Naive thymus-derived CD8-positive, alpha-beta T cell (primary cell): ENCODE measurements at regions of chr16 and their contacts with region 1.

Region 1: DNA sequence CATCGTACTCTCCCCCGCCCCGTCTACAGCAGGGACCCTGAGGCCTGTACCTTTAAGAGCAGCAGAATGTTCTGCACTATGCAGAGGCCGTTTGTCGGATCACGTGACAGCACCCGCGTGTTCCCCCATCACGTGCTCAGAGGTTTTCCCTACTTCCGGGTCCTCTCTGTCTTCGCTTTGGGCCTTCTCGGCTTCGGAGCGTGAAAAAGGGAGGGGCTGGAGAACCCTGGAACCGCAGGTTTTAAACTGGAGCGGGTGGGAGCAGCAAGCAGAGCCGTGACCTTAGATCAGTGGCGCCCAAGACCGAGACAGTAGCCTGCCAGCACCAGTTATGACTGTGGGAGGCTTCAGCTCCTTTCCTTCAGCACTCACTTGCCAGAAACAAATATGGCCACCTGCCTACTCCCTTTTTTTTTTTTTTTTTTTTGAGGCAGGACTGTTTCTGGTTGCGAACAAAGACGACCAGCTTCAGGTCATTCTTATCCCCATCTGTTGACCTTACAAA is at the start of gene CLN3:
- DNase-seq: peak; percentile 61 to 98 (median 88)
- ATAC-seq: peak; percentile 69
- H3K4me3 Mint-ChIP-seq: peak within 1 kb of the TSS; percentile 95 to 99 (median 98)
- H3K27ac Mint-ChIP-seq: peak within 1 kb of the TSS; percentile 99 to 100 (median 100)
- H3K4me1 Mint-ChIP-seq: peaks cover 42 to 79% (median 68%) of the 10 kb centered on the region in 4 donors
- H3K27me3 Mint-ChIP-seq: no peaks in the 10 kb centered on the region
- polyA plus RNA-seq, gene CLN3: 16.2 to 27.2 (median 17.2) TPM

Region 2: DNA sequence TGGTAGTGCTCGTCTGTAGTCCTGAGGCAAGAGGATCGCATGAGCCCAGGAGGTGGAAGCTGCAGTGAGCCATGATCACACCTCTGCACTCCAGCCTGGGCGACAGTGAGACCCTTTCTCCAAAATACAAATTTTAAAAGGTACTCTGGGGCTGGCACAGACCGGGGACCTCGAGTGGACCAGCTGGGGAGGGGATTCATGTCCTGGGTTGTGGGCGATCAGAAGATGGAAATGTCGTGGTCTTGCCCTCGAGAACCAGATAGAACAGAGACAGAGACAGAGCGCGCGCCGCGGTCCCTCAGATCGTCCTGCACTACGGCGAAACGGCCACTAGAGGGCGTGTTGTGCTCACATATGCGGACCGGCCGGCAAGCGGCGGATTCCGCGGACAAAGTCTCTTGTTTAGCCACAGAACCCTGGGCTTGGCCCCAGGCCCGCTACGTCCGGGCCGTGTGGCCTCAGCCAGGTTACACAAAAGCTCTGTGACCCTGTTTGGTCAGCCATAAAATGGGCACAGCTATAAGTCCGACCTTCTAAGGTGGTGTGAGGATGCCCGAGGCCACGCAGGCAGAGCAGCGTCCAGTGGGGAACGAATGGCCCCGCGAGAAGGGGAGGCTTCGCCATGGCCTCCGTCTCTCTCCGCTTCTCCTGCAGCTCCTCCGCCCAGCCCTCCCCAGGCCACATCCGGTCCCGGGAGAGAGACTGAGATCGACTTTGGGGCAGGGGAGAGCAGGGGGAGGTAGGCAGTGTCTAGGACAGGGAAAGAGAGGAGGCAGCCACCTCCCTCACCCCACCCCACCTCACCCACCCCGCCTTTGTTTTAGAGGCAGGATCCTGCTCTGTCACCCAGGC is 214.3 kb before region 1 on chr16:
- POLR2A ChIA-PET with region 1: interaction called, 22 read pairs
- DNase-seq: peak; percentile 69 to 95 (median 84)
- ATAC-seq: peak; percentile 73 to 76
- H3K4me3 Mint-ChIP-seq: peak overlapping the region; percentile 70 to 88 (median 82)
- H3K27ac Mint-ChIP-seq: peak overlapping the region; percentile 90 to 99 (median 97)
- H3K4me1 Mint-ChIP-seq: peaks cover 32 to 62% (median 47%) of the 10 kb centered on the region in 4 donors
- H3K27me3 Mint-ChIP-seq: peaks cover 0 to 10% (median 0%) of the 10 kb centered on the region in 5 donors

Region 3: GRCh38 chr16:28503611-28504271 is 11.7 kb after region 1 on chr16:
- POLR2A ChIA-PET with region 1: interaction called, 12 read pairs
- DNase-seq: no peak
- ATAC-seq: no peak
- H3K4me3 Mint-ChIP-seq: no peak overlapping the region
- H3K27ac Mint-ChIP-seq: peak overlapping the region in 3 of 10 donors; percentile 17 to 69 (median 41)
- H3K4me1 Mint-ChIP-seq: peaks cover 7 to 29% (median 22%) of the 10 kb centered on the region in 4 donors
- H3K27me3 Mint-ChIP-seq: no peaks in the 10 kb centered on the region

Region 4: GRCh38 chr16:28531777-28532744 is 40.0 kb after region 1 on chr16:
- POLR2A ChIA-PET with region 1: interaction called, 44 read pairs
- DNase-seq: no peak
- ATAC-seq: no peak
- H3K4me3 Mint-ChIP-seq: peak overlapping the region in 1 of 10 donors; percentile 40
- H3K27ac Mint-ChIP-seq: peak overlapping the region in 9 of 10 donors; percentile 21 to 90 (median 56)
- H3K4me1 Mint-ChIP-seq: peaks cover 17 to 32% (median 29%) of the 10 kb centered on the region in 4 donors
- H3K27me3 Mint-ChIP-seq: no peaks in the 10 kb centered on the region

Region 5: GRCh38 chr16:28553776-28554633 is 62.0 kb after region 1 on chr16 and contains the start of gene SGF29:
- POLR2A ChIA-PET with region 1: interaction called, 21 read pairs
- DNase-seq: peak; percentile 87 to 98 (median 92)
- ATAC-seq: peak; percentile 86 to 87
- H3K4me3 Mint-ChIP-seq: peak within 1 kb of the TSS; percentile 91 to 96 (median 92)
- H3K27ac Mint-ChIP-seq: peak within 1 kb of the TSS; percentile 90 to 99 (median 98)
- H3K4me1 Mint-ChIP-seq: peaks cover 18 to 47% (median 43%) of the 10 kb centered on the region in 4 donors
- H3K27me3 Mint-ChIP-seq: no peaks in the 10 kb centered on the region
- polyA plus RNA-seq, gene SGF29: 48.3 to 71.7 (median 50.4) TPM